Sciatic nerve (tissue), 2 donors: ENCODE measurements at regions of chr12 and their contacts with region 1.

Region 1: DNA sequence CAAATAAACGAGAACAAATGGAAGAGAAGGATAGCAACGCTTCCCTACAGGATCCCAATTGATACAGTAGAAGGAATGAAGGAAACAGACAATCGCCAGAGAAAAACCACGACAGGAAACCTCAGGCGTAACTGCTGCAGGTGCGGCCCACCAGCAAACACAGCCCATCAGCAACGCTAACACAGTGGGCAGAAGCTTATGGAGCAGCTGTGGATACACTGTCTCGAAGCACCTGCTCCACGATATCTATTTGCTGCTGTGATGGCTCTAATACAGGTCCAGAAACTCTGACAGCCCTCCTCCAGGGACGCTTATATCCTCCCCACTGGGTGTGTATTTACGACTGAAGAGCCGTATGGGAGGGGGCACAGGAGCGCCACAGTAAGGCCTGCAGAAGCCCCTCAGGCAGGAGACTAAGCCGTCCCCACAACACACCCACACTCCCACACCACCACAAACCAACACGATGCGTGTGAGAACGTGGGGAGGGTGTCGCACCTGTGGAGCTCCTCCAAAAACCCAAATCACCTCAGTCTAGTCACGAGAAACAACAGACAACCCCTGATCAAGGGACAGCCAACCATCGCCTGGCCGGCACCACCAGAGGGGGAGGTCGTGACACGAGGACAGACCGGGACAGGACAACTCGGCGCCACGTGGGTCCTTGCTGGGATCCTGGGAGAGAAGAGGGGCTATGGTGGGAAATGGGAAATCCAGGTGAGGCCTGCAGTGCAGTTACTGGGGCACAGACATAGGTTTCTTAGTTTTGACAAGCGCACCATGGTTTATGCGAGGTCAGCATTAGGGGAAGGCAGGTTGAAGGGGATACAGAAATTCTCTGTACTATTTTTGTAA is 24.0 kb downstream of the POLE start:
- DNase-seq: no peak
- ATAC-seq: no peak

Region 2: DNA sequence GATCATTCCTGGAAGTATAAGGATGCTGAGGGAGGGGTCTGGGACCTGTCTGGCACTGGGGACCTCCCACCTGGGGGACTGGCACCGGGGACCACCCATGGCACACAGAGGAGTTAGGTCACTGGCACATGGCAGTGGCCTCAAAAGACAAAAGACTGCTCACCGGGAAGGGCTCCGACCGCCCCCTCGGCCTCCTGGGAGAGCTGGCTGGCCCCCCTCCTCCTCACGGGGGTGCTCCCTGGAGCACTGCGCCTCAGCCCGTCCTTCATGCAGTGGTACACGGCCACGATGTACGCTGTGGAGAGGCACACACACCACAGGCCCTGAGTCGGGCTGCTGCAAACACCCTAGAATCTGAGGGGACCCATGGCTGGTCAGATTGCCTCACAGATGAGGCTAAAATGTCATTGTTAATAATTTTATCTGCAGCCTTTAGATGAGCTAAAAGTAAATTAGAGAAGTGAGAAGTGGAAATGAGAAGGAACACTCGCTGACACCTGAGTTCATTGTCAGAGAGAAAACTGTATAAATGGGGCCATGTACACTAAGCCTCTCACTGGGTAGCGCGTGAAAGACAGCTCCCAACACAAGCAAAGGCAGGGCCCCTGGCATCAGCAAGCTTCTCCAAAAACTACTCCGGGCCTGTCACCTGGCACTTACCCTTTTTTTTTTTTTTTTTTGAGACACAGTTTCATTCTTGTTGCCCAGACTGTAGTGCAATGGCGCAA is 30.5 kb before region 1 on chr12:
- intact Hi-C with region 1: loop called (anchors 1 kb)
- DNase-seq: no peak
- ATAC-seq: no peak

Region 3: GRCh38 chr12:132956011-132956788 is 293.1 kb after region 1 on chr12 and contains the start of gene ZNF605:
- intact Hi-C with region 1: no loop called
- DNase-seq: peak; percentile 93
- ATAC-seq: peak; percentile 97
- total RNA-seq, gene ZNF605: 19.4 TPM